ENCODE measurements at regions of chr11 and their contacts with region 1.

Region 1: DNA sequence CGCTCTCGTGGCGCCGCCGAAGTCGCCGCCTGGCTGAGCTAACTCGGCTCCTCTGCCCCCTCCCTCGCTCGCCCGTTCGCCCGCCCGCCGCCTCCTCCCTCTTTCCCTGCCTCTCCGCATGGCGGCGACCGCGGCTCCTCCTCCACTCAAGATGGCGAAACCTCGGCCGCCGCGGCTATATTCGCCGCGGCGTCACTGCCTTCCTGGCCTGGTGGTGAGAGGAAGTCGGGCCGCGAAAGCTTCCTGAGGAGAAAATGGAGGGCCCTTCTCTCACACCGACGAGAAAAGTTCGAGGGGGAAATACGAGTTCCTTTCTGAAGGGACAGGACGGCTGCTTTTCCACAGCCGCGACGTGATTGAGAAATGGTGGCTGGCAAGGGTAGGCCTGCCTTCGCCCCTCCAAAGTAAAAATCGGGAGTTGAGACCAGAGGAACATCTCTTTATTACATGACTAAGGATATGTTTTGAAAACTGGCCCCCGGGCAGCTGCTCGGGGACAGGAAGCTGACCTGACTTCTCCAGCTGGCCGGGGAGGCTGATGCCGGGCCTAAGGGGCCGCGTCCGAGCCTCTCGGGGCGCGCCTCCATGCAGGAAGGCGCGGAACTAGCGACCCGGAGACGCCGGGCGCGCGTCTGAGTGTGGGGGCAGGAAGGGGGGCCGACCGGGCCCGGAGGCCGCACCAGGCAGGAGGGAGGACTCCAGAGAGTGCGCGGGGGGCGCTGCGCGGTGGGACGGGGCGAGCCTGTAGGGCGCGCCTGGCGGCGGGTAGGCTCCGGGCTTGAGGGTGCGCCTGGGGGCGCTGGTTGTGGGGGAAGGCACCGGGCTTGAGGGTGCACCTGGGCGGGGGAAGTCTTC is at the start of gene DDX6:
- DNase-seq: peak; percentile 93
- ATAC-seq: peak; percentile 59
- H3K4me3 ChIP-seq: peak within 1 kb of the TSS; percentile 74 to 97 (median 94)
- H3K4me3 Mint-ChIP-seq: peak within 1 kb of the TSS; percentile 100
- H3K27ac ChIP-seq: peak within 1 kb of the TSS; percentile 98 to 100
- H3K27ac Mint-ChIP-seq: peak within 1 kb of the TSS; percentile 100
- H3K4me1 ChIP-seq: peaks cover 35 to 47% of the 10 kb centered on the region in 2 donors
- H3K4me1 Mint-ChIP-seq: peaks cover 32% of the 10 kb centered on the region
- H3K27me3 ChIP-seq: no peaks in the 10 kb centered on the region
- H3K27me3 Mint-ChIP-seq: no peaks in the 10 kb centered on the region
- CTCF ChIP-seq: no peak
- total RNA-seq, gene DDX6: 255 and 256 TPM in 2 replicates

Region 2: GRCh38 chr11:118689851-118690552 is 101.3 kb before region 1 on chr11:
- CTCF ChIA-PET with region 1: interaction called, 8 read pairs
- POLR2A ChIA-PET with region 1: no interaction called
- intact Hi-C with region 1: loop called (anchors 1 kb)
- DNase-seq: peak; percentile 88
- ATAC-seq: peak; percentile 94
- H3K4me3 ChIP-seq: peak overlapping the region in 4 of 5 experiments; percentile 36 to 67 (median 52)
- H3K4me3 Mint-ChIP-seq: peak overlapping the region; percentile 85
- H3K27ac ChIP-seq: peak overlapping the region in 1 of 2 donors; percentile 51
- H3K27ac Mint-ChIP-seq: peak overlapping the region; percentile 68
- H3K4me1 ChIP-seq: peaks cover 10 to 27% of the 10 kb centered on the region in 2 donors
- H3K4me1 Mint-ChIP-seq: peaks cover 20% of the 10 kb centered on the region
- H3K27me3 ChIP-seq: peaks cover 0 to 4% (median 0%) of the 10 kb centered on the region in 4 experiments
- H3K27me3 Mint-ChIP-seq: peaks cover 10% of the 10 kb centered on the region
- CTCF ChIP-seq: peak; percentile 96

Region 3: DNA sequence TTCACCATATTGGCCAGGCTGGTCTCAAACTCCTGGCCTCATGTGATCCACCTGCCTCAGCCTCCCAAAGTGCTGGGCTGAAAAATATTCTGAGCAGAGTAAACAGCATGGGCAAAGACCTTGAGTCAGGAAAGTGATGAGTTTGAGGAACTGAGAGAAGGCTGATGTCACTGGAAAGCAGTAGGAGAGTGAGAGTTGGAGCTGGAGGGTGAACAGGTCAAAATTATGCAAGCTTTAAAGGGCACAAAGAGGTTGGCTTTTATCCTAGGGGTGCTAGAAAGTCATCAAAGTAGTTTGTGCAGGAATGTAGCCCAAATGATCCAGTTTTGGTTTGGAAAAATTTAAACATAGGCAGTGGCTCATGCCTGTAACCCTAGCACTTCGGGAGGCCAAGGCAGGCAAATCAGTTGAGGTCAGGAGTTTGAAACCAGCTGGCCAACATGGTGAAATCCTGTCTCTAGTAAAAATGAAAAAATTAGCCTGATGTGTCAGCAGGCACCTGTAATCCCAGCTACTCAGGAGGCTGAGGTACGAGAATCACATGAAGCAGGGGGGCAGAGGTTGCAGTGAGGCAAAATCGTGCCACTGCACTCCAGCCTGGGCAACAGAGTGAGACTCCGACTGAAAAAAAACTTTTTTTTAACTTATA is 47.7 kb after region 1 on chr11:
- CTCF ChIA-PET with region 1: interaction called, 25 read pairs
- POLR2A ChIA-PET with region 1: interaction called, 27 read pairs
- intact Hi-C with region 1: loop called (anchors 1 kb)
- DNase-seq: peak; percentile 72
- ATAC-seq: peak; percentile 85
- H3K4me3 ChIP-seq: no peak overlapping the region
- H3K4me3 Mint-ChIP-seq: peak overlapping the region; percentile 71
- H3K27ac ChIP-seq: peak overlapping the region; percentile 25 to 44
- H3K27ac Mint-ChIP-seq: peak overlapping the region; percentile 79
- H3K4me1 ChIP-seq: peaks cover 27 to 40% of the 10 kb centered on the region in 2 donors
- H3K4me1 Mint-ChIP-seq: peaks cover 41% of the 10 kb centered on the region
- H3K27me3 ChIP-seq: no peaks in the 10 kb centered on the region
- H3K27me3 Mint-ChIP-seq: no peaks in the 10 kb centered on the region
- CTCF ChIP-seq: no peak

Region 4: DNA sequence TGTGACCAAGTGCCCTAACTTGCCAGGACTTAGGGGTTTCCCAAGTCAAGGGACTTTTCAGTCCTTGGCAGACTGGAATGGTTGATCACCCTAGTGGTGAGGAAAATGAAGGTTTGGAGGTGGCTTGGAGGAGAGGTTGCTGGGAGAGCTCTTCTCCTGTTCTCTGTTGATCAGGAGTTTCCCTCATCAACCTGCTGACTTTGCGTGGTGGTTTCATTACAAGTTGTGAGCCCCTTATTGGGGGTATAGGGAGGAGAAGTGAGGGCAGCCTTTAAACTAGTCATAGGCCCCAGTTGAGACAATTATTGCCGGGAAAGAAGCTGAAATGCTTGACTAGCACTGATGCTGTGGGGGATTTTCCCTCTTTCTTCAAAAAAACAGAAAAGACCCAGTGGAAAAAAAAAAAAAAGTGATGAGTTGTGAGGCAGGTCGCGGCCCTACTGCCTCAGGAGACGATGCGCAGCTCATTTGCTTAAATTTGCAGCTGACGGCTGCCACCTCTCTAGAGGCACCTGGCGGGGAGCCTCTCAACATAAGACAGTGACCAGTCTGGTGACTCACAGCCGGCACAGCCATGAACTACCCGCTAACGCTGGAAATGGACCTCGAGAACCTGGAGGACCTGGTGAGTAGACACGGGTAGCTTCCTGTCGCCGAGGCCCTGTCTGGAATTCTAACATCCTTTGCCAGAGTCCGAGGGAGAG is 92.2 kb after region 1 on chr11 and contains the start of gene CXCR5:
- CTCF ChIA-PET with region 1: interaction called, 47 read pairs
- POLR2A ChIA-PET with region 1: interaction called, 19 read pairs
- intact Hi-C with region 1: loop called (anchors 1 kb)
- DNase-seq: peak; percentile 94
- ATAC-seq: peak; percentile 83
- H3K4me3 ChIP-seq: peak within 1 kb of the TSS; percentile 80 to 99 (median 95)
- H3K4me3 Mint-ChIP-seq: peak within 1 kb of the TSS; percentile 97
- H3K27ac ChIP-seq: peak within 1 kb of the TSS; percentile 91 to 99
- H3K27ac Mint-ChIP-seq: peak within 1 kb of the TSS; percentile 90
- H3K4me1 ChIP-seq: peaks cover 47 to 63% of the 10 kb centered on the region in 2 donors
- H3K4me1 Mint-ChIP-seq: peaks cover 72% of the 10 kb centered on the region
- H3K27me3 ChIP-seq: no peaks in the 10 kb centered on the region
- H3K27me3 Mint-ChIP-seq: no peaks in the 10 kb centered on the region
- CTCF ChIP-seq: peak; percentile 41
- total RNA-seq, gene CXCR5: 108 and 111 TPM in 2 replicates

Region 5: DNA sequence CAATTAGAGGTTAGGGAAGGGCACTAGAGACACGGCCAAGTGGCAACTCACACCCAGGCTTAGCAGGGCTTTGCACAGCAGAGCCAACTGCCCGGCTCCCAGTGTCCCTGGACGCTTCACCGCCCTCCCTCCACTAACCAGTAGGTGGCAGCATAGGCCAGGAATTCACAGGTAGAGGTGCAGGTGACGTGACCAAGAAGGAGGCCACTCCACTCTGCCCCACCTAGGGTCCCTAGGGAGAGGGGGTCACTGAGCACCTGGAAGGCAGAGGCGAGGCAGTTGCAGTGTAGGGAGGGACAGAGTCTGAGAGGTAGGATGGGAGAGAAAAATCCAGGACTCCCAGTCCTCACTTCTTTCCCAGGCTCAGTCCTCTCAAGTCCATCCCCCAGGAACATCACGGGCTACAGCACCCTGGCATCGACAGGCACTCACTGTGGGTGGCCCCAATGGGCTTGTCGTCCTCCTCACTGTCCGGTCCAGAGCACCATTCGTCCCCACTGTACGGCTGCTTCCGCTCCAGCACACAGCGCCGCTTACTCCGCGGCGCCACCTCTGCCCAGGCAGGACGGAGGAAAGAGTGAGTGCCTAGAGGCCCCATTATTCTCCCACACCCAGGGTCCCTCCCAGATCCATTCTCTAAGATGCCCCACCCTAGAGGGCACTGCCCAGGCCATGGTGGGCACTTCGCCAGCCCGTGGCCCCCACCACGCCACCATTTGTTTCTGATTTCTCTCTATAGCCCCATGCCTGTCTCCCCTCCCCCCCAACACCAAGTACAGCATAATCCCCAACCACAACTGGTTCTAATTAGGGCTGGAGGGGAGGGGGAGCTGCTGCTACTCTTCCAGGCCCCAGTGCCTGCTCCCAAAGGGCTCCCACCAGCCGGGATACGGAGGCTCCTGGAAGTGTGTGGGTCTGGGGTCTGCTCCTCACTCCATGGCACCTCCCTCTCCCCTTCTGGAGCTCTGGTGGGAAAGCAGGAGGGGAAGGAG is 116.0 kb after region 1 on chr11:
- CTCF ChIA-PET with region 1: interaction called, 29 read pairs
- POLR2A ChIA-PET with region 1: interaction called, 34 read pairs
- intact Hi-C with region 1: no loop called
- DNase-seq: peak; percentile 90
- ATAC-seq: peak; percentile 88
- H3K4me3 ChIP-seq: no peak overlapping the region
- H3K4me3 Mint-ChIP-seq: no peak overlapping the region
- H3K27ac ChIP-seq: no peak overlapping the region
- H3K27ac Mint-ChIP-seq: peak overlapping the region; percentile 74
- H3K4me1 ChIP-seq: peaks cover 34 to 55% of the 10 kb centered on the region in 2 donors
- H3K4me1 Mint-ChIP-seq: peaks cover 36% of the 10 kb centered on the region
- H3K27me3 ChIP-seq: no peaks in the 10 kb centered on the region
- H3K27me3 Mint-ChIP-seq: no peaks in the 10 kb centered on the region
- CTCF ChIP-seq: peak; percentile 87

Region 6: GRCh38 chr11:119121008-119121810 is 329.9 kb after region 1 on chr11 and contains the start of gene HINFP:
- CTCF ChIA-PET with region 1: no interaction called
- POLR2A ChIA-PET with region 1: no interaction called
- intact Hi-C with region 1: loop called (anchors 1 kb)
- DNase-seq: peak; percentile 99
- ATAC-seq: peak; percentile 98
- H3K4me3 ChIP-seq: peak within 1 kb of the TSS; percentile 91 to 97 (median 95)
- H3K4me3 Mint-ChIP-seq: peak within 1 kb of the TSS; percentile 87
- H3K27ac ChIP-seq: peak within 1 kb of the TSS; percentile 72 to 90
- H3K27ac Mint-ChIP-seq: peak within 1 kb of the TSS; percentile 90
- H3K4me1 ChIP-seq: peaks cover 15 to 17% of the 10 kb centered on the region in 2 donors
- H3K4me1 Mint-ChIP-seq: peaks cover 26% of the 10 kb centered on the region
- H3K27me3 ChIP-seq: no peaks in the 10 kb centered on the region
- H3K27me3 Mint-ChIP-seq: no peaks in the 10 kb centered on the region
- CTCF ChIP-seq: no peak
- total RNA-seq, gene HINFP: 78.7 and 84.6 TPM in 2 replicates